ENCODE measurements at regions of chr22 and their contacts with region 1.

Region 1: DNA sequence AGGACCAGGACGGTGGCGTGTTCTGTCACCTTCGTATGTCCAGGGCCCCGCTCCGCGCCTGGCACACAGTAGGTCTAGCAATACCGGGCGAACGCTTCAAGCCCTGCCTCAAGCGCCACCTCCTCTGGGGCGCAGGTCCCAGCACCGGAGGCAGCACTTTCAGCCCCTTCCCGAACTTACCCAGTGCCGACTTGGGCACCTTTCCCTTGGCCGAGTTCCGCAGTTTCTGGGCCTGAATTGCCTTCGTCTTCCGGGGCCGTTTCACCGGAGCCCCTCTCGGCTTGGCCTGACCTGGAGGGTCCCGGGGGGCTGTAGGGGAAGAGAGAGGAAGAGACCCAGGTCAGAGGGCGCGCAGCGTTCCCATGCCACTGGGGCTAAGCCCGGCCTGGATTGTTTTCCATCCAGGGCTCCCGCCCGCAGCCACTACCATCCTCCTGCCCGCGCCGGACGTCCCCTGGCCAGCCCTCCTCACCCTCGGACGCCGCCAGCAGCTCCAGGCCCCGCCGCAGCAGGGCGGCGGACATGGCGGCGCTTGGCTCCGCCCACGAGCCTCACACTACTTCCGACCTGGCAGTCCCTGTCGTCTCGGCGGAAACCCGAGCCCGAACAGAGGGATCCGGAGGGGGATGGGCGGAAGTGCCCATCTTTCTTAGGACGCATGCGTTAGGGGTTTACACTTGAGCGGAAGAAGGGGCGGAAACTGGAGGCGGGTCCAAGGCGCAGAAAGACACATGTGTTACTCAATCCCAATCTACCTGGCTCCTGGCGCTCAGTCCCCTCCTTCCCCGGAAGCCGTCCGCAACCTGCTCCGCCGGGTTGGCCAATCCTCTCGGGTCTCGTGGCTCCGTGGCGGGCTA is at the start of gene RPS19BP1:
- DNase-seq: peak; percentile 99
- total RNA-seq, gene RPS19BP1: 49.9 to 54.4 TPM

Region 2: DNA sequence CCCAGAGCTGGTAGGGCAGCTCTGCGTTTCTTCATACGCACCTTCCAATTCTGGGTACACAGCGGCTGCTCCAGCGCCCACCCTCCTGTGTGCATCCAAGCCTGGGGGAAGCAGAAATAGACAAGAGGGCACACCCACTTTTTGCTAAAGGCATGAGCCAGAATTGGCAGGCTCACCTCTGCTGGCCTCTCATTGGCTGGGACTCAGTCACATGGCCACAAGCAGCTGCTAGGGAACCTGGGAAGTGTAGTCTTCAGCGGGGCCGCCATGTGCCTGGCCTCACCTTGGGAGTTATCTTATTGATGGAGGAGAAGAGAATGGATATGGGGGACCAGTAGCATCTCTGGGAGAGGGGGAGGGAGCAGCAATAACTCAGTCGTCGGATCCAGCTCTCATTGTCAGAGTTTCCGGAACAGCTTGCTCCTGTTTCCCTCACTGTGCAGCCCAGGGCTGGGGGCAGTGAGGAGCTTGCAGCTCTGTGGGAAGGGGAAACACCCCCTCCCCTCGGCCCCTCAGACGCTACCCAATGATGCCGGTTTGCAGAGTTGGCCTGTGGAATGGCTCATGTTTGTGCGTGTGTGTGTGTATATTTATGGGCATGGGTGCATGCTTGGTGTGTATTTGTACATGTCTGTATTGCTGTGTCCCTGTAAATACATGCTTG is 42.2 kb before region 1 on chr22:
- intact Hi-C with region 1: loop called in 1 of 2 experiments (anchors 5 kb)
- DNase-seq: peak; percentile 94

Region 3: DNA sequence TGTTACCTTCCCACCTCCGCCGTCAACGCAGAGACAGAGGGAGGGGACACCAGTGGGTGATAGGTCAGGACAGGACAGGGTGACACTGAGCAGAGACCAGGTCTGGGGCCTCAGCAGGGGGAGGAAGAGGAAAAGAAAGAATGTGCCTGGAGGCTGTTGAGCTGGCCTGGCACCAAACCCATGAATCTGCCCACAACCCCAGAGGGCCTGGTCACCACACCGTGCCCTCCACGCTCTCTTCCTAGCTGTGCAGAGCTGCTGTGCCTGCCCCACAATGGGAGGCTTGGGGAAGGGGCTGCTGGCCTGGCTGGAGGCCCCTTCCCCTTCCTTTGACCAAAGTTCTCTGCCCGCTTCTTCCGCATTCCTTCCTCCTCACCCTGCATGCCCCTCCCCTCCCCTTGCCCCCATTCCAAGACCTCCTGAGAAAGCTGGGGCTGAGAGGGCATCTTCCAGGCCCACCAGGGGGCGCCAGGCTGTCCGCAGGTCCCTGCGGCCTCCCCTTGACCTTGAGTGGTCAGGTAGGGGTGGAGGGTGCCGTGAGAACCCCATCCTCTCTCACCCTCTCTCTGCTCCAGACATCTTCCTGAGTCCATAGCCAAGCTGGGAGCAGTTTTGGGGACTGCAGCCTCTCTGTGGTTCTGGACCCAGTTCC is 27.1 kb after region 1 on chr22:
- intact Hi-C with region 1: no loop called
- DNase-seq: no peak

Region 4: GRCh38 chr22:40024201-40025061 is 492.0 kb after region 1 on chr22:
- intact Hi-C with region 1: loop called in 1 of 2 experiments (anchors 5 kb)
- DNase-seq: peak; percentile 88

Region 5: DNA sequence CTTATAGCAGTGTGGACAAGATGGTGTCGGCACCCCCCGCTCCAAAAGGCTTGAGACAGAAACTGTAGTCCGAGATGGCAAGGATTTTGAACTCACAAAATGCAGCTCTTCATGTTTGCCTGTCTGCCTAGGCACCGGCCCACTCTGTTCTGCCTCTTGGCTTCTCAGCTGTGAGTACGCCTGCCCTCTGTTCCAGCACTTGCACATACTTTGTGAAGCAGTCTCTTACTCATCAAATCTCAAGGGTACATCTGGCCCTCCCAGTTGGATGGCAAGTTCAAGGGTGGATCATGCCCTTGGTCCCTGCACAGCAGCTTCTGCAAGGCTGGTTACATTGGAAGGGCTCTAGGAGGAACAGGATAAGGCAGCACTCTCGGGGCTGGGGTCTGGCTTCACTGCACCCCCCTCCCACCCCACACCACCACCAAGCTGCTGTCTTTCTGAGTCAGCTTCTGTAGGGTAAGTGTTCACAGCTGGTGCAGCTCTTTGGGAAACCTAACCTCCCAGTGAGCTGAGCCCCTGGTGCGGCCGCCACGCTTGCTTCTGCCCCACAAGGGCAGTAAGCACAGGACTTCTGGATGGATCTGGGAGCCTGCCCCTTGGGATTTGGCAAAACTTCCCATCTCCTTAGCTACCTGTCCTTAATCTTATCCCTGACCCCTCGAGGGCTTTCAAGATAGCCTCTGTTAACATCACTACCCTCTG is 499.5 kb after region 1 on chr22:
- intact Hi-C with region 1: loop called (anchors 5 kb)
- DNase-seq: peak; percentile 79

Region 6: DNA sequence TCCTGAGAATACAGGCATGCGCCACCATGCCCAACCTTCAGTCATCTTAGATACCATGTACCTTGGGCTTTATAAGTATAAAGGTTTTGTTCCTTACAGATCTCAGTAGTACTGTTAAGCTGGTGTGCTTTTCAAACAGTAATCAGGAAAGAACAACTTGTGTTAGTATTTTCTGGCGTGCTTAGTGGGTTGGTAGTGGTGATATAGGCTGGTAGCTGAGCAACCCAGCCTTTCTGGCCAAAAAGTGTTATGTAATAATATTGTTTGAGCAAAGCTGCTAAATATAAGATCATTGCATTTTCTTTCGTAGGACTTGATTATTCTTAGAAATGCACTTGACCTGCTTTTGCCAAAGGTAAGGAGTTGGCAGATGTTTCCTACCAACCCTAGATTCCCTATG is 820.3 kb after region 1 on chr22:
- intact Hi-C with region 1: loop called in 1 of 2 experiments (anchors 10 kb)
- DNase-seq: no peak

Measured in posterior vena cava (tissue), 2 donors.